ENCODE measurements at regions of chr20 and their contacts with region 1.

Region 1: GRCh38 chr20:38036366-38036765 is 2.8 kb downstream of the RPRD1B start:
- DNase-seq: no peak
- H3K4me3 ChIP-seq: peak overlapping the region; percentile 39
- H3K27ac ChIP-seq: no peak overlapping the region
- H3K4me1 ChIP-seq: peaks cover 40% of the 10 kb centered on the region
- CTCF ChIP-seq: no peak

Region 2: GRCh38 chr20:38049800-38050199 is 13.4 kb after region 1 on chr20:
- CTCF ChIA-PET with region 1: no interaction called
- POLR2A ChIA-PET with region 1: interaction called, 11 read pairs
- intact Hi-C with region 1: no loop called
- DNase-seq: no peak
- H3K4me3 ChIP-seq: no peak overlapping the region
- H3K27ac ChIP-seq: no peak overlapping the region
- H3K4me1 ChIP-seq: no peaks in the 10 kb centered on the region
- CTCF ChIP-seq: no peak